Posterior cingulate gyrus (tissue), 11 donors: ENCODE measurements at regions of chr12 and their contacts with region 1.

Region 1: DNA sequence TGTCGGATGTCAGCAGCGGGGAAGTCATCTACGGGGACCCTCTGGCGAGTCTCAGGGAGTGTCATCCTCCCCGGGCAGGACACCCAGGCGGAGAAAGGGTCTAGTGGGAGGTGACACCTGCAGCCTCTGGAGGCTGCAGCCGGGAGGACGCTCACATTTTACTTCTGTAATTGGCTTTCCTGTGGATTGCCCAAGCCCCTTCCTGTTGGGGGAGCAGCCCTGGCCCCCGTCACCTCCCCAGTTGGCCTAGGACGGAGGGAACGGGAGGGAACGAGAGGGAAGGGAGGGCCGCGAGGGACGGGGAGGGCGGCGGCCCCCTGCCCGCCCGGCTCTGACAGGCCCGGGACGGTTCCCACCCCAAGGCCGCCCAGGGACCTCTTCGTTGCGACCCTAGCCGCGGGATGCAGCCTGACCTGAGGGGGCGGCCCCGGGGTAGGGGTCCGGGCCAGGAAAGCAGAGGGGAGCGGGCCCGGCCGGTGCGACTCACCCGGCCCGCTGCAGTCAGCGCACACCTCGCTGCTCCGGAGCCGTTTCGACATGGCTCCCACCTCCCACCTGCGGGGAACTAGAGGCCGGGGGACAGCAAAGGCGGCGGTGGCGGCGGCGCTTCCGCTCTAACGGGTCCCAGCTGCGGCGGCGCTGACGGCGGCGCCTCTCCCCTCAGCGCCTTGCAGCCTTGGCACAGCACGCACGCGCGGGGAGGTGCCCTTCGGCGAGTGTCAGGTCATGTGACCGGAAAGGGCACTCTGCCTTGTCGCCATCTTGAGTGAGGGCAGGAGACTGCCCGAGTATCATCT is at the start of gene GIT2:
- DNase-seq: peak; percentile 91 to 99 (median 95)

Region 2: DNA sequence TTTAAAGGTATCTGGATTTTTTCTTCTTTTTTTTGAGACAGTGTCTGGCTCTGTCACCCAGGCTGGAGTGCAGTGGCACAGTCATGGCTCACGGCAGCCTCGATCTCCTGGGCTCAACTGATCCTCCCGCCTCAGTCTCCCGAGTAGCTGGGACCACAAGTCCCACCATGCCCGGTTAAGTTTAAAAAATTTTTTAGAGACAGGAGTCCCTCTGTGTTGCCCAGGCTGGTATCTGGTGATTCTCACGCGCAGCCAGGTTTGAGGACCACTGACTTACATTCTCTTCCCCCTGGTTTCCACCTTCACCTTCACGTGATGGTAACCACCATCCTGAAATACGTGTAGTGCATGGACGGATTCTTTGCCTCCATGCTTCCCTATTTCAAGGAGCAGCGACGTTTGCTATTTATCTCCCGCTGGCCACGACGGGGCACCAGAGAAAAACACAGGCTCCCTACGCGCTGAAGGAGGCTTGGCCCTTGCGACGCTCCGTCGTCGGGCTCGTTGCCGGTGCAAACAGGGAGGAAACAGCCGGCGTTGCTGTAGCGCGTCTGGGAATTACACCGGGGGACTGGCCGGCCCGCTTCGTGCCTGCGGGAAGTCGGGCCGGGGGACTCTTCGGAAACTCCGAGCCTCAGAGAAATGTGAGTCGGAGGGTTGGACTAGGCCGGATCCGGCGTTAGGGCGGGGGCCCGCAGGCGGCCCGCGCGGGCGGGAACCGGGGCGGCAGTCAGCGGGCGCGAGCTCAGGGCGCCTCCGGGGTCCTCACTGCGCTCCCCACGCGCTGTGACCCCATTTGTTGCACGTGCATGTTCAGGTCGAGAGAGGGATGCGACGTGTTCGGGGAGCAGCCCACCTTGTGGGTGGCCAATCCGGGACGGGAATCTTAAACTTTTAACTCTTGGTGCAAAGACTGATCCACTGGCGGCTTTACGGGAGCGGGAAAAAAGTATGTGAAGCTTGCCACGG is 95.8 kb before region 1 on chr12 and contains the start of gene TCHP:
- intact Hi-C with region 1: loop called (anchors 5 kb)
- DNase-seq: peak; percentile 82 to 98 (median 88)

Region 3: GRCh38 chr12:110039085-110039807 is 43.4 kb after region 1 on chr12:
- intact Hi-C with region 1: loop called (anchors 5 kb)
- DNase-seq: peak in 1 of 10 donors; percentile 8

Region 4: DNA sequence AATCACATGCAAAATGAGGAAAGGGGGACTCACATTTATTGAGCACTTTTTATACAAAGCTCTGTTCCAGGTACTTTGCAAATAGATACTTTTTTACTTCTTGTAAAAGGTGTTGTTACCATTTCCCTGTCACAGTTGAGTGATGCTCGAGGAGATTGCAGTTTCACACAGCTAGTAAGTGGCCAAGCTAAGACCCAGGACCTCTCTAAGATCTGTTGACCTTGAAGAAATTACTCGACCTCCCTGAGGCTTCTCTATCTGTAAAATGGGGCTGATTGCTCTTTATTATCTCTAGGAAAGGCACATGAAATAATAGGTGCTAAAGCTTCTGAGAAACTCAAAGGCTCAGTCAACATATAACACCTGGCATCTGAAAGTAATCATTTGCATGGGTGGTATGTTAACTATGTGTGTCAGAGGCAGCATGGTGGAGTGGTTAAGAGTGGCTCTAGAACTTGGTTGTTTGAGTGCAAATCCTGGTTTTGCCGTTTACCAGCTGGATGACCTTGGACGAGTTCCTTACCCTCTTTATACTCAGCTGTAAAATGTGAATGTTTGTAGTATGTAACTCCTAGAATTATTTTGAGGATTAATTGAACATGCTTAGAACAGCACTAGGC is 169.8 kb after region 1 on chr12:
- intact Hi-C with region 1: no loop called
- DNase-seq: no peak